ENCODE measurements at regions of chr7 and their contacts with region 1.

Region 1: GRCh38 chr7:1049006-1049741 is 4.8 kb downstream of the GPR146 start:
- DNase-seq: no peak
- H3K4me3 ChIP-seq: no peak overlapping the region
- H3K27ac ChIP-seq: peak overlapping the region in 1 of 2 donors; percentile 90
- H3K4me1 ChIP-seq: peaks cover 21 to 23% of the 10 kb centered on the region in 2 donors
- H3K27me3 ChIP-seq: no peaks in the 10 kb centered on the region
- CTCF ChIP-seq: no peak
- POLR2A ChIP-seq: no peak

Region 2: GRCh38 chr7:1081931-1082401 is 32.8 kb after region 1 on chr7:
- intact Hi-C with region 1: no loop called
- DNase-seq: no peak
- H3K4me3 ChIP-seq: no peak overlapping the region
- H3K27ac ChIP-seq: no peak overlapping the region
- H3K4me1 ChIP-seq: peaks cover 0 to 6% of the 10 kb centered on the region in 2 donors
- H3K27me3 ChIP-seq: no peaks in the 10 kb centered on the region
- CTCF ChIP-seq: no peak
- POLR2A ChIP-seq: no peak

Region 3: DNA sequence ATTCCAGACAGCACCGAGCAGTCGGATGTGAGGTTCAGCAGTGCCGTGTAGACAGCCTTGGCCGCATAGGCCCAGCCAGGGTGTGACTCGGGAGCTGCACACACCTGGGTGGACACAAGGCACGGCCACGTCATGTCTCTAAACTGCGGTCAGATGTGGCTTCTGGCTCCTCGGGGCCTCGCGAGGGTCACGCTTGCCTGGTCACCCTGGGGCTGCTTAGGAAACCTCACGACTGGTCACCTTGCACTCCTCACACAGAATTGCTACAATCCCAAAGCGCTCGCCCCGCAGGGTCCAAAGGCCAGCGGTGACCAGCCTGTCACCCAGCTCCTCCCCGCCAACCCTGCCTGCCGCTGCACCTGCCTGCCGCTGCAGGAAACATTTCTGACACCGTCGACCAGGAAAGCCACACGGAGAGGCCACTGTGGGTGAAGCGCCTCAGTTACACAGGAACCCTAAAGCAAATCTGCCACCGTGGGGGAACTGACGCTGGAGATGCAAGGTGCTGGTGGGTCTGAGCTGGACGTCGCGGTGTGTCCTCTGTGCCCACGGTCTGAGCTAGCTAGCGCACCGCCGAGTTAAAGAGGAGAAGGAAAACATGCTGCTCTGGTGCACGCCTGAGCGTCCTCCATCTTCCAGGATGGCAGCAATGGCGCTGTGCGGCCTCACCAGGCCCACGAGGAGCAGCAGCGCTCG is 43.8 kb after region 1 on chr7:
- intact Hi-C with region 1: loop called (anchors 1 kb)
- DNase-seq: no peak
- H3K4me3 ChIP-seq: no peak overlapping the region
- H3K27ac ChIP-seq: no peak overlapping the region
- H3K4me1 ChIP-seq: peaks cover 0 to 5% of the 10 kb centered on the region in 2 donors
- H3K27me3 ChIP-seq: no peaks in the 10 kb centered on the region
- CTCF ChIP-seq: no peak
- POLR2A ChIP-seq: no peak

Region 4: GRCh38 chr7:1247527-1248059 is 198.4 kb after region 1 on chr7:
- intact Hi-C with region 1: no loop called
- DNase-seq: no peak
- H3K4me3 ChIP-seq: peak overlapping the region in 1 of 3 donors; percentile 45
- H3K27ac ChIP-seq: no peak overlapping the region
- H3K4me1 ChIP-seq: peaks cover 5 to 8% of the 10 kb centered on the region in 2 donors
- H3K27me3 ChIP-seq: peaks cover 30 to 99% of the 10 kb centered on the region in 2 donors
- CTCF ChIP-seq: no peak
- POLR2A ChIP-seq: no peak

Region 5: GRCh38 chr7:2971914-2972834 is 1923.0 kb after region 1 on chr7:
- intact Hi-C with region 1: no loop called
- DNase-seq: peak in 1 of 2 donors; percentile 14
- H3K4me3 ChIP-seq: no peak overlapping the region
- H3K27ac ChIP-seq: no peak overlapping the region
- H3K4me1 ChIP-seq: no peaks in the 10 kb centered on the region
- H3K27me3 ChIP-seq: no peaks in the 10 kb centered on the region
- CTCF ChIP-seq: no peak
- POLR2A ChIP-seq: no peak